ENCODE measurements at regions of chr1 and their contacts with region 1.

Region 1: GRCh38 chr1:14968251-14968851 is 185.2 kb upstream of the TMEM51 start:
- DNase-seq: peak; percentile 91
- ATAC-seq: peak; percentile 92
- H3K4me3 ChIP-seq: no peak overlapping the region
- H3K27ac ChIP-seq: peak overlapping the region; percentile 86
- H3K4me1 ChIP-seq: peaks cover 24% of the 10 kb centered on the region
- H3K27me3 ChIP-seq: no peaks in the 10 kb centered on the region
- CTCF ChIP-seq: no peak
- POLR2A ChIP-seq: no peak
- RAD21 ChIP-seq: peak; percentile 17

Region 2: GRCh38 chr1:14929547-14930246 is 38.7 kb before region 1 on chr1:
- CTCF ChIA-PET with region 1: no interaction called
- POLR2A ChIA-PET with region 1: interaction called, 4 read pairs
- dilution Hi-C with region 1: no loop called
- in situ Hi-C with region 1: no loop called
- intact Hi-C with region 1: loop called (anchors 1 kb)
- DNase-seq: peak; percentile 86
- ATAC-seq: peak; percentile 70
- H3K4me3 ChIP-seq: no peak overlapping the region
- H3K27ac ChIP-seq: peak overlapping the region; percentile 2; the same call in 1 of the 2 replicates
- H3K4me1 ChIP-seq: peaks cover 28% of the 10 kb centered on the region
- H3K27me3 ChIP-seq: no peaks in the 10 kb centered on the region
- CTCF ChIP-seq: no peak
- POLR2A ChIP-seq: 0 out of 2 replicates have a peak, but pooled peaks have one; percentile 30
- RAD21 ChIP-seq: no peak; the same call in 1 of the 2 replicates